Activated CD4-positive, alpha-beta T cell treated with anti-CD3 and anti-CD28 coated beads, Interleukin-2, amount 10 ng/mL, durations not matched to agents 24 days and 14 days (primary cell): ENCODE measurements at regions of chr17 and their contacts with region 1.

Region 1: GRCh38 chr17:47204722-47205418 is 4.3 kb upstream of the MYL4 start:
- DNase-seq: peak; percentile 80
- H3K4me3 Mint-ChIP-seq: peak overlapping the region; percentile 63
- H3K27ac Mint-ChIP-seq: peak overlapping the region; percentile 88
- H3K4me1 Mint-ChIP-seq: peaks cover 51% of the 10 kb centered on the region
- H3K27me3 Mint-ChIP-seq: no peaks in the 10 kb centered on the region

Region 2: GRCh38 chr17:47188876-47189731 is 15.8 kb before region 1 on chr17 and contains the start of gene CDC27:
- intact Hi-C with region 1: loop called (anchors 1 kb)
- DNase-seq: peak; percentile 100
- H3K4me3 Mint-ChIP-seq: peak within 1 kb of the TSS; percentile 97
- H3K27ac Mint-ChIP-seq: peak within 1 kb of the TSS; percentile 97
- H3K4me1 Mint-ChIP-seq: peaks cover 30% of the 10 kb centered on the region
- H3K27me3 Mint-ChIP-seq: no peaks in the 10 kb centered on the region
- total RNA-seq, gene CDC27: 95.4 and 101 TPM in 2 replicates